ENCODE measurements at regions of chr5 and their contacts with region 1.

Region 1: GRCh38 chr5:45484781-45485180 is 211.4 kb downstream of the HCN1 start:
- DNase-seq: no peak
- H3K4me3 ChIP-seq: no peak overlapping the region
- H3K27ac ChIP-seq: no peak overlapping the region
- H3K4me1 ChIP-seq: no peaks in the 10 kb centered on the region
- H3K27me3 ChIP-seq: no peaks in the 10 kb centered on the region
- CTCF ChIP-seq: no peak
- POLR2A ChIP-seq: no peak

Region 2: DNA sequence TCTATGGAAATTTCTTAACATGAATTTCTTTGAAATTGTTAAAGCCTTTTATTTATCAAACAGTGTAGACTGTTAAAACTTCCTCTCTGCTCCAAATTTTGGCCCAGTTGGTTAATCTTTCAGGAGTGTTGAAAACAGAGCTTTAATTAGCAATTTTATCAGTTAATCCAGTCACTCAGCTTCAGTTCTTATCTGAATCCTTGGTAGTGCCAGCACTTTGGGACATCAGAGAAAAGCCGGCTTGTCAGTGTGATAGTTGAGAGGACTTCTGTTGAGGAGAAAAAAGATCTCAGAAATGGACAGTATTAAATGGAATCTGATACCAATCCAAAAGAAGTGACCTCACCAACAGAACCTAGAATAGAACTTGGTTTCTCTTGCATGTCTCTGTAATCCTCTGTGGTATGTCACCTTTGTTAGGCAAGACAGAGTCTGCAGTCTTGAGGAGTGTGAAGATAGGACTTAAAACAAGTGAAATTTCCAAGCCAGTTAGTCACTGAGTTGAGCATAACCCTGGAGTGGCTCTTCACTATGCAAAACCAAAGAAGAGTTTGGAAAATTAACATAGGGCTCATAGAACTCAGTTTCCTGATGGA is 1630.0 kb before region 1 on chr5:
- CTCF ChIA-PET with region 1: no interaction called
- POLR2A ChIA-PET with region 1: no interaction called
- dilution Hi-C with region 1: no loop called
- intact Hi-C with region 1: loop called (anchors 10 kb)
- DNase-seq: no peak
- H3K4me3 ChIP-seq: no peak overlapping the region
- H3K27ac ChIP-seq: no peak overlapping the region
- H3K4me1 ChIP-seq: no peaks in the 10 kb centered on the region
- H3K27me3 ChIP-seq: no peaks in the 10 kb centered on the region
- CTCF ChIP-seq: no peak
- POLR2A ChIP-seq: no peak